ENCODE measurements at regions of chr6 and their contacts with region 1.

Region 1: GRCh38 chr6:122033539-122034181 is 365.8 kb upstream of the HSF2 start:
- DNase-seq: no peak
- H3K4me3 ChIP-seq: no peak overlapping the region
- H3K27ac ChIP-seq: no peak overlapping the region
- H3K4me1 ChIP-seq: no peaks in the 10 kb centered on the region
- H3K27me3 ChIP-seq: no peaks in the 10 kb centered on the region
- CTCF ChIP-seq: peak; percentile 46 to 52 (median 51)
- POLR2A ChIP-seq: no peak

Region 2: GRCh38 chr6:121426686-121427085 is 607.0 kb before region 1 on chr6:
- intact Hi-C with region 1: loop called (anchors 10 kb)
- DNase-seq: no peak
- H3K4me3 ChIP-seq: no peak overlapping the region
- H3K27ac ChIP-seq: no peak overlapping the region
- H3K4me1 ChIP-seq: no peaks in the 10 kb centered on the region
- H3K27me3 ChIP-seq: no peaks in the 10 kb centered on the region
- CTCF ChIP-seq: no peak
- POLR2A ChIP-seq: no peak

Region 3: DNA sequence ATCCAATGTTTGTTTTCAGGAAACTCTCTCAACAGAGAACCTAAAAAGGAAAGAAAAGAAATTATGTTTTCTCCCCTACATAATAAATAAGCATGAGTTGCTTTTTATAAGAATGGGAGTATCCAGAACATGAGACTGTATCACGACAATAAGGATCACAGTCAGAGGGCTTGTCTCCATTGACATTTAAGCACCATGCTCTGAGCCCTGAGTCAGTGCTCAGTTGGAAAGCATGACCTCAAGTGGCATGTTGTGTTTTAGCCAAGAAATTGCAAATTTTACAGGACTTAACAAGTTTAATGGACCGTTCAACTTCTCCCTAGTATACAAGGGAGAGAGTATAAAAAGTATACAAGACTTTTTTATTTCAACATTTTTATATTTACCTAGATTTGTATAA is 166.6 kb before region 1 on chr6:
- intact Hi-C with region 1: no loop called
- DNase-seq: no peak
- H3K4me3 ChIP-seq: no peak overlapping the region
- H3K27ac ChIP-seq: no peak overlapping the region
- H3K4me1 ChIP-seq: no peaks in the 10 kb centered on the region
- H3K27me3 ChIP-seq: no peaks in the 10 kb centered on the region
- CTCF ChIP-seq: no peak
- POLR2A ChIP-seq: no peak

Region 4: GRCh38 chr6:121951918-121952379 is 81.7 kb before region 1 on chr6:
- intact Hi-C with region 1: no loop called
- DNase-seq: peak; percentile 22
- H3K4me3 ChIP-seq: no peak overlapping the region
- H3K27ac ChIP-seq: no peak overlapping the region
- H3K4me1 ChIP-seq: no peaks in the 10 kb centered on the region
- H3K27me3 ChIP-seq: no peaks in the 10 kb centered on the region
- CTCF ChIP-seq: no peak
- POLR2A ChIP-seq: no peak

Region 5: DNA sequence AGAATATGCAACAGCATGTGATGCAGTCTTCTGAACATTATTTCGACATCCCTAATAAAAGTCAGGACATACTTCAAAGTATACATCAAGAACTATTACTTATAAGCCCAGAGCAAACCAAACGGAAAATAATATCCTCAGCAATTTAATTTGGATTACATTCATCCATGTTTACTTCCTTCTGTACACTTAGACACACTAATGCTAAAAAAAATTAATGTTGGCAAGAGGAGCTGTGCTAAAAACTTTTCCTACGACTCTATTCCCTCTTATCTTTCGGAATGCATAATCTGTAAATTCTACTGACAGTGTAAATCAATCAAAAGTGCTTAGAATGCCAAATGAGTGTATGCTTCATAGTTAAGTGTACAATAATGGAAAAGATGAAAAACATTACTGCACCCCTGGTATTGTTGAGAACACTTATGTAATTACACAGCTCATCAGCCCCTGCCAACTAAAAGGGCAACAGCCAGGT is 64.6 kb after region 1 on chr6:
- intact Hi-C with region 1: no loop called
- DNase-seq: no peak
- H3K4me3 ChIP-seq: no peak overlapping the region
- H3K27ac ChIP-seq: no peak overlapping the region
- H3K4me1 ChIP-seq: no peaks in the 10 kb centered on the region
- H3K27me3 ChIP-seq: no peaks in the 10 kb centered on the region
- CTCF ChIP-seq: no peak
- POLR2A ChIP-seq: no peak

Measured in testis (tissue), 5 donors.